ENCODE measurements at regions of chr17 and their contacts with region 1.

Region 1: DNA sequence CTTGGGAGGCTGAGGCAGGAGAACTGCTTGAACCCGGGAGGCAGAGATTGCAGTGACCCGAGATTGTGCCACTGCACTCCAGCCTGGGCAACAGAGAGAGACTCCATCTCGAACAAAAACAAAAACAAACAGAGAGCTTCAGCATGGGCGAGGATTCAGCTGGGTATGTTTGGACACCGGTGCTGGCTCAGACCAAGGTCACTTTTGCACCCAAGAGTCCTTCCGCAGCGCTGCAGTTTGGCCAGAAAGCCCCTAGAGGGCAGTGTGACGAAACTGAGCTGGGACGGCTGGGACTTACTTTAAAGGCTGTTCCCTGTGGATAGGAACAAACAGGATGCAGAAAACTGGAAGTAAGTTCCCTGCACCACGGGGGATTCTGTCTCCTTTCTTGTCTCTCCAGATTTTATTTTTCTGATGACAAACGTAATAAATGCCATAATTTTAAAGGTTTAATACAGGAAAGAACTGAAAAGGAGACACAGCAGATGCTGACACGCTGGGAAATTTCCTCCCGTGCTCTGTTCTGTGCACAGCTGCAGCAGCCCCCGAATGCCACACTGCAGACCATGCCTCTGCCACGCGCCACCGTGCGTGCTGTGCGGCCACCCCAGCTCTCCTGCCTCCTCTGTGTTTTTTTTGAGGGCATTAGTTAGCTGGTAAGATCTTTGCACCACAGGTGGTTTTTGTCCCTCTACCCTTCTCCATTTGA is 25.2 kb upstream of the USP36 start:
- DNase-seq: peak; percentile 76
- H3K4me3 Mint-ChIP-seq: no peak overlapping the region
- H3K27ac Mint-ChIP-seq: no peak overlapping the region
- H3K4me1 Mint-ChIP-seq: peaks cover 3% of the 10 kb centered on the region
- H3K27me3 Mint-ChIP-seq: peaks cover 2% of the 10 kb centered on the region

Region 2: DNA sequence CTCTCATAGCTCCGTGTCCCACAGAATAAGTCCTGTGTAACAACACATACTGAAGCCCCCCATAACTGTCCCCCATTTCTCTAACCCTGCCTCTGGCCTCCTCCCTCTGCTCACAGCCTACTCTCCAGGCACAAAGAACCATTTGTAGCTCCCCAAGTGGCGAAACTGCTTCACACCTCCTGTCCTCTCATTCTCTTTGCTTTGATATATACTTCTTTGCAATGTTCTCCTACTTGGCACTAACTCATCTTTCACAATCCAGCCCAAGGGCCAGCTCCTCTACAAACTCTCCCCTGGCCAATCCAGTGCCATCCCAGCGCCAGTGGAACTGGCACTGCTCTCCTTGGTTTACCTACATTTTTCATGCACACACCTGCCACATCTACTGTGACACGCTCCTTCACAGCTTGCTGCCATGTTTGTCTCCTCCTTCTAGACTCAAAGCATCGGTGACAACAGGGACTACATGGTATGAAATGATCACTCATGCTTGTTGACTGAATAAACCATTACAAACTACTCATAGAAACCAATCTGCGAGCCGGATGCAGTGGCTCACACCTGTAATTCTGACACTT is 96.6 kb before region 1 on chr17:
- CTCF ChIA-PET with region 1: no interaction called
- intact Hi-C with region 1: no loop called
- DNase-seq: peak; percentile 54
- H3K4me3 Mint-ChIP-seq: no peak overlapping the region
- H3K27ac Mint-ChIP-seq: no peak overlapping the region
- H3K4me1 Mint-ChIP-seq: peaks cover 42% of the 10 kb centered on the region
- H3K27me3 Mint-ChIP-seq: no peaks in the 10 kb centered on the region

Region 3: GRCh38 chr17:78890498-78890897 is 24.7 kb after region 1 on chr17:
- CTCF ChIA-PET with region 1: interaction called, 11 read pairs
- intact Hi-C with region 1: no loop called
- DNase-seq: peak; percentile 82
- H3K4me3 Mint-ChIP-seq: no peak overlapping the region
- H3K27ac Mint-ChIP-seq: no peak overlapping the region
- H3K4me1 Mint-ChIP-seq: peaks cover 30% of the 10 kb centered on the region
- H3K27me3 Mint-ChIP-seq: no peaks in the 10 kb centered on the region

Region 4: GRCh38 chr17:78925234-78925633 is 59.4 kb after region 1 on chr17 and contains the start of gene TIMP2:
- CTCF ChIA-PET with region 1: interaction called, 3 read pairs
- intact Hi-C with region 1: loop called (anchors 1 kb)
- DNase-seq: peak; percentile 72
- H3K4me3 Mint-ChIP-seq: no peak within 1 kb of the TSS
- H3K27ac Mint-ChIP-seq: no peak within 1 kb of the TSS
- H3K4me1 Mint-ChIP-seq: peaks cover 14% of the 10 kb centered on the region
- H3K27me3 Mint-ChIP-seq: peaks cover 8% of the 10 kb centered on the region
- total RNA-seq, gene TIMP2: 0.35 to 0.43 TPM

Region 5: GRCh38 chr17:78970834-78971773 is 105.3 kb after region 1 on chr17:
- CTCF ChIA-PET with region 1: interaction called, 31 read pairs
- intact Hi-C with region 1: loop called (anchors 1 kb)
- DNase-seq: peak; percentile 89
- H3K4me3 Mint-ChIP-seq: peak overlapping the region; percentile 32
- H3K27ac Mint-ChIP-seq: peak overlapping the region; percentile 67
- H3K4me1 Mint-ChIP-seq: peaks cover 11% of the 10 kb centered on the region
- H3K27me3 Mint-ChIP-seq: no peaks in the 10 kb centered on the region

Region 6: GRCh38 chr17:79065105-79065670 is 199.4 kb after region 1 on chr17:
- CTCF ChIA-PET with region 1: no interaction called
- intact Hi-C with region 1: no loop called
- DNase-seq: peak; percentile 80
- H3K4me3 Mint-ChIP-seq: no peak overlapping the region
- H3K27ac Mint-ChIP-seq: no peak overlapping the region
- H3K4me1 Mint-ChIP-seq: peaks cover 3% of the 10 kb centered on the region
- H3K27me3 Mint-ChIP-seq: no peaks in the 10 kb centered on the region